ENCODE measurements at regions of chr17 and their contacts with region 1.

Region 1: DNA sequence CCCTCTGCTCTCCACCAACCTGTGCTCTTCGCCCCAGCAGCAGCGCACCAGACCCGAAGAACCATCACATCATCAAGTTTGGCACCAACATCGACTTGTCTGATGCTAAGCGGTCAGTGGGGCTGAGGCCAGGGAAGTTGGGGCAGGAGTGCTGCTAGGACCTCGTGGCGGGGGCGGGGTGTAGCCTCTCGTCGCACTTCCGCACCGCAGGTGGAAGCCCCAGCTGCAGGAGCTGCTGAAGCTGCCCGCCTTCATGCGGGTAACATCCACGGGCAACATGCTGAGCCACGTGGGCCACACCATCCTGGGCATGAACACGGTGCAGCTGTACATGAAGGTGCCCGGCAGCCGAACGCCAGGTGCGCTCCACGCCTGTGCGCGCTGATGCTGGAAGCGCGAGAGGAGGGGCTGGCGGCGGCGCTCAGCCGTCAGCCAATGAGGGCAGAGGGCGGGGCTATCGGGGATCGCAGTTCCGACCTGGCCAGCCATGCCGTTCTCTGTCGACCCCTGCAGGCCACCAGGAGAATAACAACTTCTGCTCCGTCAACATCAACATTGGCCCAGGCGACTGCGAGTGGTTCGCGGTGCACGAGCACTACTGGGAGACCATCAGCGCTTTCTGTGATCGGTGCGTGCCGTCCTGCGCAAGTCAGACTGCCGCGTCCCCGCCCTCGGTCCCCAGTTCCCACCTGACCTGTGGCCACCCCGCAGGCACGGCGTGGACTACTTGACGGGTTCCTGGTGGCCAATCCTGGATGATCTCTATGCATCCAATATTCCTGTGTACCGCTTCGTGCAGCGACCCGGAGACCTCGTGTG is 3.2 kb upstream of the TMEM88 start:
- DNase-seq: peak; percentile 94
- ATAC-seq: peak; percentile 94
- H3K4me3 Mint-ChIP-seq: peak overlapping the region; percentile 76
- H3K27ac Mint-ChIP-seq: peak overlapping the region; percentile 67
- H3K4me1 Mint-ChIP-seq: peaks cover 53% of the 10 kb centered on the region
- H3K27me3 Mint-ChIP-seq: no peaks in the 10 kb centered on the region
- CTCF ChIP-seq: peak; percentile 97

Region 2: GRCh38 chr17:7834962-7835813 is 16.5 kb before region 1 on chr17:
- CTCF ChIA-PET with region 1: interaction called, 49 read pairs
- POLR2A ChIA-PET with region 1: interaction called, 74 read pairs
- intact Hi-C with region 1: no loop called
- DNase-seq: peak; percentile 94
- ATAC-seq: peak; percentile 50
- H3K4me3 Mint-ChIP-seq: peak overlapping the region; percentile 83
- H3K27ac Mint-ChIP-seq: peak overlapping the region; percentile 91
- H3K4me1 Mint-ChIP-seq: peaks cover 41% of the 10 kb centered on the region
- H3K27me3 Mint-ChIP-seq: no peaks in the 10 kb centered on the region
- CTCF ChIP-seq: peak; percentile 84